ENCODE measurements at regions of chr14 and their contacts with region 1.

Region 1: DNA sequence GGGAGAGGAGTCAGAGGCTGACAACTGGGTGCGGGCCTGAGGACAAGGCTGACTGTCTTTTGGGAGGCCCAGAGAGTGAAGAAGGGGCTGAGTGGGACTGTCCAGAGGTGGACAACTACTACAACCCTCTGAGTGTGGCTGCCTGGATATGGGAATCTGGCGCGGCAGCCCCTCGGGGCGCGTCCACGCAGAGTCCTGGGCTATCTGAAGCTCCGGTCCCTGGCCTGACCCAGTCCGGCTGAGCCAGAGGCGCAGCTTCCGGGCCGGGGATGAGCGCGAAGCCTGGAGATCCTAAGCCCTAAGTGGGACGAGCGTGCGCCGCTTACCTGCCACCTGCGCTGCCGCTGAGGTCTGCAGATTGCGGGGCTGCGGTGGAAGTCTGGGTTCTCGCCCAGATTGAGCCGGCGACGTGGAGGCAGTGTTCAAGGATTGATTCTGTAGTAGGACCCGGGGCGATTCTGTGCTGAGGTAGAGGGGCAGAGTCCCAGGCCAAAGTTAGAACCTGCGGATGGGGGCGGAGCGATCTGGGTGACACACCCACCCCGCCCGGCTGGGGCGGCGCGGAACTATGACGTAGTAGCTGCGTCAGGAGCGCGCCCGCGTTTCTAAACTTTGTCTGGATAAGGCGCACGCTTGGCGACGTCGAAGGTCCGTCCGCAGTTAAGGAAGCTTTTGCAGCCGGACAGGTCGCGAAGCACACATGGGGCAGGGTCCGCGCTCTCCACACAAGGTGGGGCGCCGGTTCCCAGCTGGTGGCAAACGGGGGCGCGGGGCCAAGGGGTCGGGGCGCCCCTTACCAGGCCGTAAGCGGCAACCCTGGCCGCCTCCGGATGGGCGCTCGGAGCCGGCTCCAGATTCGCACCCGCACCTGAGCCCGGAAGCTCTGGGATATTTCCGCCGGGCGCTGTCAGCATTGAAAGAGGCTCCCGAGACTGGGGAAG is at the starts of genes DHRS1 and NOP9:
- DNase-seq: peak; percentile 90
- H3K4me3 ChIP-seq: peak within 1 kb of the TSS; percentile 80 to 95 (median 85)
- H3K27ac ChIP-seq: peak within 1 kb of the TSS; percentile 94
- H3K4me1 ChIP-seq: peaks cover 37% of the 10 kb centered on the region
- H3K27me3 ChIP-seq: no peaks in the 10 kb centered on the region
- CTCF ChIP-seq: no peak
- total RNA-seq, gene DHRS1: 19.2 to 84.8 TPM
- total RNA-seq, gene NOP9: 26.7 to 42.8 TPM

Region 2: DNA sequence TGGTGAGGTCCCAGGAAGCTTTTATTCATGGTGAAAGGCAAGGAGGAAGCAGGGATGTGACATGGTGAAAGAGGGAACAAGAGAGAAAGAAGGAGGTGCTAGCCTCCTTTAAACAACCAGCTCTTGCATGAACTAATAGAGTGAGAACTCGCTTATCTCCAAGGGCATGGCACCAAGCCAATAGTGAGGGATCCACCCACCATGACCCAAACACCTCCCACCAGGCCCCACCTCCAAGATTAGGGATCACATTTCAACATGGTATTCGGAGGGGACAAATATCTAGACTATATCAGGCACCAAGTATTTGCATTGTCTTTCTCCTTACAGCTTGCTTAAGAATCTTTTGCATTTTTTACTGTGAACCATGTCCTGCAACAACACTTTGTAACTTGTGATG is 437.9 kb before region 1 on chr14:
- CTCF ChIA-PET with region 1: no interaction called
- dilution Hi-C with region 1: no loop called
- in situ Hi-C with region 1: no loop called
- intact Hi-C with region 1: no loop called
- DNase-seq: no peak
- H3K4me3 ChIP-seq: no peak overlapping the region
- H3K27ac ChIP-seq: no peak overlapping the region
- H3K4me1 ChIP-seq: no peaks in the 10 kb centered on the region
- H3K27me3 ChIP-seq: no peaks in the 10 kb centered on the region
- CTCF ChIP-seq: no peak

Region 3: DNA sequence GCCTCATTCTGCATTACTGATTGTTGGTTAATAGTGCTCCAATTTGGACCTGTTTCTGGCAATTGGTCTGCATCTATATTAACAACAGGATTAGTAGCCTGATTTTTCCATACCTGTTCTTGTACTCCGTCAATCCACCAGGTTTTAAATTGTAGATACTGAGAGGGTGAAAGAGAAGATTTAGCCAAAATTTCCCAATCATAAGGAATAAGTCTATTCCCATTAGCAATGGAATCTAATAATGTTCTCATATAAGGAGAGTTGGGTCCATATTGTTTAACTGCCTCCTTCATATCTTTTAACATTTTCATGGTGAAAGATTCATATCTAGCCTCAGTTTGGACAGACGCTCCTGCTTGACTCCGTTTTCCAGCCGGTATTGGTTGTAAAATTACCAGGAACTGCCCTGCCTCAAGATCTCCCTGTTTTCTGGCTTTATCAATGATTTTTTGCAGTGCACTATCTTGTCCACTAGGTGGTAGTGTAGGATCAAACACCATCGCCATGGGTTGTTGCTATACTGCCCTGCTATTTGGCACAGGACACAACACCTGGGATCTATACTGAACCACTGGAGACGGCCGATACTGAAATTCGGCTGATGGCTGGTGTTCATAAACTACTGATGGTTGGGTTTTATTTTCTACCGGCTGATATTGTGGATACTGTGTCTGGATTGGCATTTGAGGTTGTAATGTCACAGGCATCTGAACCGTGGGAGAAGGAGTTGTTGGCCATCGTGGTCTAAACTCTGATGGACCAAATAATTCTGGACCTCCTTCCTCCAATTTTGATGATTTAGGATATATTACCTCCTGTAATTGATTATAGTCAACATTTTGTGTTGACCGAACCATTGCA is 285.6 kb before region 1 on chr14:
- CTCF ChIA-PET with region 1: no interaction called
- dilution Hi-C with region 1: no loop called
- in situ Hi-C with region 1: no loop called
- intact Hi-C with region 1: loop called (anchors 2 kb)
- DNase-seq: peak; percentile 65
- H3K4me3 ChIP-seq: no peak overlapping the region
- H3K27ac ChIP-seq: no peak overlapping the region
- H3K4me1 ChIP-seq: no peaks in the 10 kb centered on the region
- H3K27me3 ChIP-seq: no peaks in the 10 kb centered on the region
- CTCF ChIP-seq: peak; percentile 86 to 90

Region 4: GRCh38 chr14:24114536-24115450 is 184.7 kb before region 1 on chr14 and contains the starts of genes DCAF11 and NRL:
- CTCF ChIA-PET with region 1: interaction called, 6 read pairs
- dilution Hi-C with region 1: no loop called
- in situ Hi-C with region 1: no loop called
- intact Hi-C with region 1: loop called (anchors 1 kb)
- DNase-seq: peak; percentile 100
- H3K4me3 ChIP-seq: peak within 1 kb of the TSS; percentile 63 to 96 (median 74)
- H3K27ac ChIP-seq: peak within 1 kb of the TSS; percentile 91
- H3K4me1 ChIP-seq: peaks cover 16% of the 10 kb centered on the region
- H3K27me3 ChIP-seq: no peaks in the 10 kb centered on the region
- CTCF ChIP-seq: no peak
- total RNA-seq, gene DCAF11: 38.4 to 55.7 TPM
- total RNA-seq, gene NRL: 1.1 to 1.5 TPM

Region 5: GRCh38 chr14:24160850-24161804 is 138.4 kb before region 1 on chr14 and contains the start of gene IRF9:
- CTCF ChIA-PET with region 1: no interaction called
- dilution Hi-C with region 1: no loop called
- in situ Hi-C with region 1: no loop called
- intact Hi-C with region 1: loop called (anchors 1 kb)
- DNase-seq: peak; percentile 83
- H3K4me3 ChIP-seq: peak within 1 kb of the TSS; percentile 58 to 67 (median 58)
- H3K27ac ChIP-seq: peak within 1 kb of the TSS; percentile 46
- H3K4me1 ChIP-seq: peaks cover 9% of the 10 kb centered on the region
- H3K27me3 ChIP-seq: no peaks in the 10 kb centered on the region
- CTCF ChIP-seq: peak; percentile 93 to 98
- total RNA-seq, gene IRF9: 43.0 to 45.7 TPM

Region 6: GRCh38 chr14:24215495-24216344 is 83.8 kb before region 1 on chr14 and contains the start of gene MDP1:
- CTCF ChIA-PET with region 1: interaction called, 3 read pairs
- dilution Hi-C with region 1: no loop called
- in situ Hi-C with region 1: no loop called
- intact Hi-C with region 1: loop called (anchors 1 kb)
- DNase-seq: peak; percentile 83
- H3K4me3 ChIP-seq: peak within 1 kb of the TSS; percentile 34 to 86 (median 46)
- H3K27ac ChIP-seq: peak within 1 kb of the TSS; percentile 42
- H3K4me1 ChIP-seq: peaks cover 14% of the 10 kb centered on the region
- H3K27me3 ChIP-seq: no peaks in the 10 kb centered on the region
- CTCF ChIP-seq: peak; percentile 39 to 60
- total RNA-seq, gene MDP1: 6.5 to 12.0 TPM

Region 7: DNA sequence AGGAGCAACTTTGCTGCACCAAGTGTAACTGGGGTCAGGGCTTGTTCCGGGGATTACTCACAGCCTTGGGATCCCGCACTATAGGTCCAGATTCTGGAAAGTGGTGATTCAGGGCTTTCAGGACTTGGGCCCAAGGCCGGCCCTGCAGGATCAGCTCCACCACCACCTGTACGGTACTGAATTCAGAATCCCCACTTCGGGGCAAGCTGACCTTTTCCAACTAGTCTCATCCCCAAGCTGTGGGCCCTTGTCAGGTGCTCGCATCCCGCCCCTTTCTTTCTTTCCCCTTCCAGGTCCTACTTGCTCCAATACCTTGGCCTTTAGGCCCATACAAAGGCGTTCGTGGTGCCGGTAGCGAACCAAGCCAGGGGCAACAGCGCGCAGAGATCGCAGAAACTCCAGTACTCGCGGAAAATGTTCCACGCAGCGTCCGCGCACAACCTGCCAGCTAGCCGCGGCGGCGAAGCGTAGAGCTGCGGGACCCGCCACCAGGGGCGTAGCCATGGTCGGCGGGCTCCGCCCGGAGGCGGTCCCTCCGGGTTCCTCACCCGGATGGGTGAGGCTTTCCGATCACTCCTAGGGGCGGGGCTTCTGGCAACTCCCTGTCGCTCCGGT is 57.6 kb before region 1 on chr14:
- CTCF ChIA-PET with region 1: interaction called, 37 read pairs
- dilution Hi-C with region 1: no loop called
- in situ Hi-C with region 1: loop called (anchors 5 kb)
- intact Hi-C with region 1: loop called (anchors 1 kb)
- DNase-seq: peak; percentile 93
- H3K4me3 ChIP-seq: peak overlapping the region; percentile 54 to 71 (median 63)
- H3K27ac ChIP-seq: peak overlapping the region; percentile 97
- H3K4me1 ChIP-seq: peaks cover 44% of the 10 kb centered on the region
- H3K27me3 ChIP-seq: no peaks in the 10 kb centered on the region
- CTCF ChIP-seq: peak in 1 of 2 donors; percentile 51

Region 8: GRCh38 chr14:24271134-24271833 is 28.2 kb before region 1 on chr14 and contains the start of gene RABGGTA:
- CTCF ChIA-PET with region 1: interaction called, 10 read pairs
- dilution Hi-C with region 1: no loop called
- in situ Hi-C with region 1: no loop called
- intact Hi-C with region 1: loop called (anchors 1 kb)
- DNase-seq: peak; percentile 88
- H3K4me3 ChIP-seq: peak within 1 kb of the TSS; percentile 64 to 90 (median 70)
- H3K27ac ChIP-seq: peak within 1 kb of the TSS; percentile 84
- H3K4me1 ChIP-seq: peaks cover 29% of the 10 kb centered on the region
- H3K27me3 ChIP-seq: no peaks in the 10 kb centered on the region
- CTCF ChIP-seq: peak; percentile 55 to 81
- total RNA-seq, gene RABGGTA: 51.3 to 74.5 TPM